Activated naive CD8-positive, alpha-beta T cell treated with anti-CD3 and anti-CD28 coated beads, Interleukin-2, amount 10 ng/mL, durations not matched to agents 7 days and 5 days (primary cell): ENCODE measurements at regions of chr10 and their contacts with region 1.

Region 1: DNA sequence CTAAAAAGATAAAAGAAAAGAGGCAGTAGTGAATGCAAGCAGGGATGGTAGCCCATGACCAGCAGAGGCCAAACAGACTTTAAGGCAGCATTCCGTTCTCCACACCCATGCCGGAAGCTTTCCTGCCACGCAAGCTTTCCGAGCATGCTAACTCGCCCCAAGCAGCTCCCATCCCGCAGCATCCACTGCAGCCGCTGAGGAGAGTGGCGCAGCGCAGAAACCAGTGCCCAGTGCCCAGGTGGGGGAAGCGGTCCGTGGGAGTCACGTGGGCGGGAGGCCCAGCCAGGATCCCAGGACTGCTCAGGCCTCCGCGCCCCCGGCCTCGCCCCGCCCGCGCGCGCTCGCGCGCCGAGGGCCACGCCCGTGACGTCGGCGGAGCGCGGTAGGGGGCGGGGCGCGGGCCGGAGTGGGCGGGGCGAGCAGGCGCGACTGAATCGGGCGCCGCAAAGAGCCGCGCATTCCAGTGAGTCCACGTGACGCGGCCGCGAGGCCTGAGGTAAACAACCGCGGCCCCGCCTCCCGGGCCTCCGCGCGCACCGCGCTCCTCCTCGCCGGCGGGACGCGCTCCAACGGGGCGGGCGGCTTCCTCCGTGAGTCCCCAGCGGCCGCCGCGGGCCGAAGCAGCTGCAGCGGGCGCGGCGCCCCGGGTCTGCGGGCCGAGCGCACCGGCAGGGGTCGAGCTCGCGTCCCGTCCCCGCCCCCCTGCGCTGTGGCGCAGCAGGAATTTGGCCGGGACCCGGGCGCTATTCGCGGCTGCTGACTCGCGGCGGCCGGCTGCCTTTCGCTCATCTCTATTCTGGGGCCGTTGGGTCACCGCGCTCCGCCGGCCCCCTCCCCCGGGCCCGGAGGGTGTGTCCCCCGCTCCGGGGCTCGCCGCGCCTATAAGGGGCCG is at the start of gene OTUD1:
- DNase-seq: peak; percentile 99
- ATAC-seq: peak; percentile 80
- H3K4me3 Mint-ChIP-seq: peak within 1 kb of the TSS; percentile 92
- H3K27ac Mint-ChIP-seq: peak within 1 kb of the TSS; percentile 80
- H3K4me1 Mint-ChIP-seq: peaks cover 30% of the 10 kb centered on the region
- H3K27me3 Mint-ChIP-seq: peaks cover 3% of the 10 kb centered on the region
- total RNA-seq, gene OTUD1: 20.1 to 21.0 TPM

Region 2: GRCh38 chr10:23362879-23363792 is 75.7 kb before region 1 on chr10:
- POLR2A ChIA-PET with region 1: interaction called, 24 read pairs
- DNase-seq: no peak
- ATAC-seq: peak; percentile 86
- H3K4me3 Mint-ChIP-seq: peak overlapping the region; percentile 81
- H3K27ac Mint-ChIP-seq: peak overlapping the region; percentile 99
- H3K4me1 Mint-ChIP-seq: peaks cover 48% of the 10 kb centered on the region
- H3K27me3 Mint-ChIP-seq: no peaks in the 10 kb centered on the region

Region 3: DNA sequence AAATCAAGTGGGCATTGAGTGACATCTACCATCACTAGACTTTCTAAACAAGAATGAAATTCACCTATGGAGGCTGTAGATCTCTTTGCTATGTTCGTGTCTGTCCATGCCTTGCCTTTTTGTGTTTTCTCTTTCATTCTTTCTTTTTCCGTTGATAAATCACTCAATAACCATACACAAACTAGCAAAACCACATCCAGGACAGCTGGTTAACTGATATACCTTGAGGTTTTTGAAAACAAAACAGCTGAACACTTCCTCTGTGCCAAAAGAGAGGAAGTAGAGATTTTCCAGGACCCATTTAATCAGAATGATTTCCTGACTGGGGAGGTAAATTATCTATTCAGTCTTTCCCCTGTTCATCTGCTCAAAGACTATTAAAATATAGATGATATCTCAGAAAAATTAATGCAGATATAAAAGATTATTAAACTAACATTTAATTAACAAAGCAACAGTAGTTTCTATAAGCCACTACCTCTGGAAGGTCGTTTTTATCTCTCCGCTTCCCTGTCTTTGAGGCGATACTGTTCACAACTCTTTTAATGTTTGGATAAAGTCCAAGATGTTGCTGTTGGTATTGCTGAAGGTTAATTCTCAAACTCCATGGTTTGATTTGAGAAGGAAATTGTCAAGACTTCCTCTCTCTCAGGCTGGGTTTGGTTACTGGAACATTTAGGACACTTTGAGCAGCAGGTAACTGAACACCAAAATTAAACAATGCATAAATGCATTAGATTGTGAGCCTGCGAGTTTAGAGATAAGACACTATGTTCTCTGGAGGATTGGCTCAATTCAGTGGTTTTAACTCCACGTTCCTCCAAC is 69.8 kb before region 1 on chr10:
- POLR2A ChIA-PET with region 1: interaction called, 24 read pairs
- DNase-seq: no peak
- ATAC-seq: peak; percentile 79
- H3K4me3 Mint-ChIP-seq: peak overlapping the region; percentile 64
- H3K27ac Mint-ChIP-seq: peak overlapping the region; percentile 87
- H3K4me1 Mint-ChIP-seq: peaks cover 54% of the 10 kb centered on the region
- H3K27me3 Mint-ChIP-seq: no peaks in the 10 kb centered on the region

Region 4: DNA sequence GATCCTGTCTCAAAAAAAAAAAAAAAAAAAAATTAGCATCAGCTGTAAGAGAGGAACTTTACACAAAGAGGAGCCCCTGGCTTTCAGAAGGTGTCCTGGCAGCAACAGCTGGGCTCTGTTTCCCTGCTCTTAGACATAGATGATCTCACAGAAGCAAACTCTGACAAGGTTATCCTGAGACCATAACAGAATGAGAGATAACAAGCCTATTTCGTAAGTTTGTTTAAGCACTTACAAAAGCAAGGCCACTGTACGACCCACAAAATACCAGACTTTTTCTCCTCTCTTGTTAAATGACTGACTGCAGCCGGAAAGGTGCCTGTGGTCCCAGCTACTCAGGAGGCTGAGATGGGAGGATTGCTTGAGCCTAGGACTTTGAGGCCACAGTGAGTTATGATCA is 33.3 kb before region 1 on chr10:
- POLR2A ChIA-PET with region 1: no interaction called
- DNase-seq: no peak
- ATAC-seq: no peak
- H3K4me3 Mint-ChIP-seq: no peak overlapping the region
- H3K27ac Mint-ChIP-seq: no peak overlapping the region
- H3K4me1 Mint-ChIP-seq: no peaks in the 10 kb centered on the region
- H3K27me3 Mint-ChIP-seq: no peaks in the 10 kb centered on the region

Region 5: GRCh38 chr10:23496727-23497126 is 57.9 kb after region 1 on chr10:
- POLR2A ChIA-PET with region 1: no interaction called
- DNase-seq: no peak
- ATAC-seq: no peak
- H3K4me3 Mint-ChIP-seq: no peak overlapping the region
- H3K27ac Mint-ChIP-seq: no peak overlapping the region
- H3K4me1 Mint-ChIP-seq: no peaks in the 10 kb centered on the region
- H3K27me3 Mint-ChIP-seq: peaks cover 12% of the 10 kb centered on the region